ENCODE measurements at regions of chr15 and their contacts with region 1.

Region 1: GRCh38 chr15:88401996-88402656 is 65.1 kb downstream of the MRPL46 start:
- DNase-seq: peak; percentile 95
- H3K4me3 ChIP-seq: peak overlapping the region; percentile 58
- H3K27ac ChIP-seq: peak overlapping the region; percentile 99
- H3K4me1 ChIP-seq: peaks cover 61% of the 10 kb centered on the region
- CTCF ChIP-seq: no peak

Region 2: DNA sequence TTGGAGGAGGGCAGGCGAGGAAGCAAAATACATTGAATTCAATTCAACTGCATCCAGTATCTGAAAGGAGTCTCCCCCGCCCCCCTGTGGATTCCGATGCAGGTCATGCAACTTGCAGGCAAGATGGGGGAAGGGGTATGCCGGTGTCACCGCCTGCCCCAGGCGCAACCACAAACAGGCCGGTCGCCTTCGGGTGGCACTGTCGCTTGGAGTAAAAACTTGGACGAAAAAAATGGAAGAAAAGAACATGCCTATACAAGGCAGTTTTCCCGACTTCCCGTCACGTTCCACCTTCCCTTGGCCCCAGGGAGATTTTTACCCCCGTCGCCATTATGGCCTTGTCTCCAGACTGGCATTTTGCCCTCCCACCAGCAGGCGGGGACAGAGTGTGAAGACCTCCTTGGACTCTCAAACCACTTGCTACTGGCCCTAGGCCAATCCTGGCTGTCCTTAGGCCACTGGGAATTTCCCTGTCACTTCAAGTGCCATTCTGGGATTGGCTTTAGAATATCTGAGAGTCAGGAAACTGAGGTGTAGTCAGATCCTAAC is 144.0 kb before region 1 on chr15:
- CTCF ChIA-PET with region 1: no interaction called
- POLR2A ChIA-PET with region 1: interaction called, 10 read pairs
- intact Hi-C with region 1: no loop called
- DNase-seq: peak; percentile 29
- H3K4me3 ChIP-seq: peak overlapping the region; percentile 71
- H3K27ac ChIP-seq: no peak overlapping the region
- H3K4me1 ChIP-seq: peaks cover 7% of the 10 kb centered on the region
- CTCF ChIP-seq: peak; percentile 64

Region 3: GRCh38 chr15:88331280-88331679 is 70.8 kb before region 1 on chr15:
- CTCF ChIA-PET with region 1: no interaction called
- POLR2A ChIA-PET with region 1: interaction called, 10 read pairs
- intact Hi-C with region 1: loop called (anchors 5 kb)
- DNase-seq: peak; percentile 83
- H3K4me3 ChIP-seq: no peak overlapping the region
- H3K27ac ChIP-seq: no peak overlapping the region
- H3K4me1 ChIP-seq: no peaks in the 10 kb centered on the region
- CTCF ChIP-seq: peak; percentile 96

Region 4: GRCh38 chr15:88348579-88349230 is 53.4 kb before region 1 on chr15:
- CTCF ChIA-PET with region 1: interaction called, 3 read pairs
- POLR2A ChIA-PET with region 1: interaction called, 19 read pairs
- intact Hi-C with region 1: loop called (anchors 2 kb)
- DNase-seq: peak; percentile 77
- H3K4me3 ChIP-seq: peak overlapping the region; percentile 3
- H3K27ac ChIP-seq: peak overlapping the region; percentile 55
- H3K4me1 ChIP-seq: peaks cover 36% of the 10 kb centered on the region
- CTCF ChIP-seq: peak; percentile 60

Region 5: DNA sequence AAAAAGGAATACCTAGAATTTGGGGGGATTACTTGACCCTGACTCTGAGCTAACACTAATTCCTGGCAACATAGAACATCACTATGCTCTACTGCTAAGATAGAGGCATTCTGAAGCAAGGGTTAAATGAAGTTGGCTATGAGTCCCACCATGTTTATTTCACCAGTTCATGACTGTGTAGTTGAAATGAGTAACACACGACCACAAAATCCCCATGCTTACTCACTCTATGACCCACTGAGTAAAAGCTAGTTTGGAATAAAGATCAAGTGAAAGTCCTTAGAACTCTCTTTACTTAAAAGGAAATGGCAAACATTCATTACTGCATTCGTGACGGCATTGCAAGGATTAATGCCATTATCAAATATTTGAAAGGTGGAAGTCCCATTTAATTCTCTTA is 17.7 kb after region 1 on chr15:
- CTCF ChIA-PET with region 1: no interaction called
- POLR2A ChIA-PET with region 1: interaction called, 20 read pairs
- intact Hi-C with region 1: no loop called
- DNase-seq: no peak
- H3K4me3 ChIP-seq: no peak overlapping the region
- H3K27ac ChIP-seq: no peak overlapping the region
- H3K4me1 ChIP-seq: no peaks in the 10 kb centered on the region
- CTCF ChIP-seq: no peak

Region 6: DNA sequence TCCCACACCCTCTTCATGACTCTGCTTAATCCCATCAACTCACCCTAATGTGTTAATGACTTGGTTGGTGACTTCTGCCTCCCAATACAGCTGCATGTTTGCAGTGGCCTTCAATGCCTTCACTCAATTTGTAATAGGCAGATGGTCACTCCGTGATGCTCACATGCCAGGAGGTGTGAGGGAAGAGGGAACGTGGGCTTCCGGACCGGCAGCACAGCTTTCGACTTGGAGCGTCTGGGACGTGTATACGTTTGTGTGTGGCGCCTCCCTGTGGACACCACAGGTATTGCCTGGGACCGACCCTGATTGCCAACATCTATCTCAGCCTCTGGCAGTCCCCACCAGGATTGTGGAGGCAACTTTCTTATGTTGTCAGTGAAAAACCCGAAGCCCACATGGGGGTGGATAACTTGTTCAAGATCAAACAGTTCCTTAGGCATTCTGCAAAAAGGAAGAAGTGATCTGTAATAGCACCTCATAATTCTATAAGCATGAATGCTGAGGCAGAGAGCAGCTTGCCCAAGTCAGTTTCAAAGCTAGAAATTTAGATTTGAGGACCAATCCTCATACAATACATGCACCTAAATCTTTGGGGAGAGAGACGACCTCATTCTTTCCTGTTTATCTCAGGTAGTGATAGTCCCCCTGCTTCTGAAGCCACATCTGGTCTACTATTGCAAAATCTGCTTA is 48.1 kb after region 1 on chr15:
- CTCF ChIA-PET with region 1: interaction called, 5 read pairs
- POLR2A ChIA-PET with region 1: interaction called, 9 read pairs
- intact Hi-C with region 1: loop called (anchors 2 kb)
- DNase-seq: peak; percentile 85
- H3K4me3 ChIP-seq: no peak overlapping the region
- H3K27ac ChIP-seq: no peak overlapping the region
- H3K4me1 ChIP-seq: peaks cover 8% of the 10 kb centered on the region
- CTCF ChIP-seq: peak; percentile 97

Region 7: GRCh38 chr15:88467073-88467934 is 65.2 kb after region 1 on chr15 and contains the starts of genes MRPL46 and MRPS11:
- CTCF ChIA-PET with region 1: no interaction called
- POLR2A ChIA-PET with region 1: interaction called, 7 read pairs
- intact Hi-C with region 1: loop called (anchors 2 kb)
- DNase-seq: peak; percentile 94
- H3K4me3 ChIP-seq: peak within 1 kb of the TSS; percentile 93
- H3K27ac ChIP-seq: peak within 1 kb of the TSS; percentile 64
- H3K4me1 ChIP-seq: peaks cover 31% of the 10 kb centered on the region
- CTCF ChIP-seq: no peak
- total RNA-seq, gene MRPL46: 30.4 and 32.4 TPM in 2 replicates
- total RNA-seq, gene MRPS11: 49.8 and 61.6 TPM in 2 replicates

Region 8: DNA sequence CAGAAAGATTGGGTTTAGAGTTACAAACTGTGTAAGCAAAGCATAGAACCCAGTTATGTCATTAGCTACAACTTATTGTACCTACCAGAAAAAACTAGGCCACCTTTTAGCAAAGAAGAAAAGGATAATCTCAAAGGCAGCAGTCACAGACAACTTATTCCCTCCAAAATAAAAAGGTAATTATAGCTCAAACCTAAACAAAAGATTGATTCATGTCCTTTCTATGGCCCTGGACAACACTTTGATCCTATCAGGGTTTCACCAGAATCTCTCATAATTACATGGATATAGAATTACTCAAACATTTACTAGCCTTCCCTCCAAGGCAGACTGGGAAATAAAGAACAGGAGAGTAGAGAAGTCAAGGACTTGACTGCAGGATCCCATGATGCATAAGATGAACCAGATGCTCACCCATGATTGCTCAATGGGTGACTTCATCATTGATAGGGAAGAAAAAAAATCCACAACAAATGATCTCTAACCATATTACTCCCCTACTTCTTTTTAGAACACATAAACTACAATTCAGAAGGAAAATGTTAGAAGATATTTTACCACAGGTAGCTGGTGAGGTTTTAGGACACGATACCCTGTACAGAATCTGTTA is 127.0 kb after region 1 on chr15:
- CTCF ChIA-PET with region 1: no interaction called
- POLR2A ChIA-PET with region 1: no interaction called
- intact Hi-C with region 1: no loop called
- DNase-seq: no peak
- H3K4me3 ChIP-seq: no peak overlapping the region
- H3K27ac ChIP-seq: no peak overlapping the region
- H3K4me1 ChIP-seq: no peaks in the 10 kb centered on the region
- CTCF ChIP-seq: no peak

Measured in OCI-LY7 (cell line).